WTC11 (cell line): ENCODE measurements at regions of chr2 and their contacts with region 1.

Region 1: GRCh38 chr2:151999053-151999452 is 99.8 kb downstream of the CACNB4 start:
- DNase-seq: peak; percentile 81
- ATAC-seq: peak; percentile 93
- H3K4me3 Mint-ChIP-seq: no peak overlapping the region
- H3K27ac Mint-ChIP-seq: no peak overlapping the region
- H3K4me1 Mint-ChIP-seq: peaks cover 25% of the 10 kb centered on the region
- H3K27me3 Mint-ChIP-seq: no peaks in the 10 kb centered on the region
- CTCF ChIP-seq: peak; percentile 74

Region 2: GRCh38 chr2:151946899-151947822 is 51.9 kb before region 1 on chr2:
- CTCF ChIA-PET with region 1: interaction called, 11 read pairs
- POLR2A ChIA-PET with region 1: no interaction called
- DNase-seq: peak; percentile 62
- ATAC-seq: peak; percentile 98
- H3K4me3 Mint-ChIP-seq: peak overlapping the region; percentile 43
- H3K27ac Mint-ChIP-seq: peak overlapping the region; percentile 51
- H3K4me1 Mint-ChIP-seq: peaks cover 12% of the 10 kb centered on the region
- H3K27me3 Mint-ChIP-seq: peaks cover 3% of the 10 kb centered on the region; the same call in 1 of the 2 replicates
- CTCF ChIP-seq: peak; percentile 65

Region 3: GRCh38 chr2:151973901-151974199 is 25.2 kb before region 1 on chr2:
- CTCF ChIA-PET with region 1: interaction called, 17 read pairs
- POLR2A ChIA-PET with region 1: no interaction called
- DNase-seq: peak; percentile 31
- ATAC-seq: peak; percentile 97
- H3K4me3 Mint-ChIP-seq: no peak overlapping the region
- H3K27ac Mint-ChIP-seq: no peak overlapping the region
- H3K4me1 Mint-ChIP-seq: peaks cover 36% of the 10 kb centered on the region
- H3K27me3 Mint-ChIP-seq: no peaks in the 10 kb centered on the region
- CTCF ChIP-seq: no peak

Region 4: DNA sequence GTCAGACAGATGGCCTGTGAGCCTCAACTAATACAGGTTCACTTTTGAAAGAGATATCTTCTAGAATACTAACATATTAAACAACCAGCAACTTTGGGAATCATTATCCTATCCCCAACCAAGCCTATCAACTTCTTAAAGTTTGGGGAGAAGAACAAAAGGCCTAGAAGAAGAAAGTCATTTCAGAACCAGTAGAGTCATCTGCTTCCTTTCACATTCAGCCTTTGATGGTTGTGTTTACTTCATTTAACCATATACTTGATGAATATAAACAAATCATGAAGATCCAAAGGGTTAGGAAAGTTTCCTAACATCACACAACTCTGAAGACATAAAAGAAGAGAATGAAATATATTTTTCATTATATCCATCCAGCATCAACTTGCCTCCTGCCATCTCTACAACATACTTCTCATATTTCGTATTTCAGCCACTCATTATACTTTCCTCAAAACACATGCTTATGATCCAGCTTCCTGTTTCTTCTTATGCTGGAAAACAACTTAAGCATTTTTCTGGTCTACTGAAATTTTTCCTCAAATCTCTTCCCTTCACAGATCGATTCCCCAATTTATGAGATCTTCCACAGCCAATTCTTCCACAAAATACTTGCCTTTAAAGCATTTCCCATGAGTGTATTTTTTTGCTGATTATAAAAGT is 14.5 kb before region 1 on chr2:
- CTCF ChIA-PET with region 1: interaction called, 11 read pairs
- POLR2A ChIA-PET with region 1: interaction called, 4 read pairs
- DNase-seq: no peak
- ATAC-seq: no peak
- H3K4me3 Mint-ChIP-seq: no peak overlapping the region
- H3K27ac Mint-ChIP-seq: no peak overlapping the region
- H3K4me1 Mint-ChIP-seq: peaks cover 6% of the 10 kb centered on the region
- H3K27me3 Mint-ChIP-seq: no peaks in the 10 kb centered on the region
- CTCF ChIP-seq: no peak

Region 5: GRCh38 chr2:152280780-152281179 is 281.7 kb after region 1 on chr2:
- CTCF ChIA-PET with region 1: no interaction called
- POLR2A ChIA-PET with region 1: no interaction called
- DNase-seq: no peak
- ATAC-seq: no peak
- H3K4me3 Mint-ChIP-seq: no peak overlapping the region
- H3K27ac Mint-ChIP-seq: no peak overlapping the region
- H3K4me1 Mint-ChIP-seq: no peaks in the 10 kb centered on the region
- H3K27me3 Mint-ChIP-seq: peaks cover 6% of the 10 kb centered on the region
- CTCF ChIP-seq: no peak